GM12878 (cell line): ENCODE measurements at regions of chr9 and their contacts with region 1.

Region 1: DNA sequence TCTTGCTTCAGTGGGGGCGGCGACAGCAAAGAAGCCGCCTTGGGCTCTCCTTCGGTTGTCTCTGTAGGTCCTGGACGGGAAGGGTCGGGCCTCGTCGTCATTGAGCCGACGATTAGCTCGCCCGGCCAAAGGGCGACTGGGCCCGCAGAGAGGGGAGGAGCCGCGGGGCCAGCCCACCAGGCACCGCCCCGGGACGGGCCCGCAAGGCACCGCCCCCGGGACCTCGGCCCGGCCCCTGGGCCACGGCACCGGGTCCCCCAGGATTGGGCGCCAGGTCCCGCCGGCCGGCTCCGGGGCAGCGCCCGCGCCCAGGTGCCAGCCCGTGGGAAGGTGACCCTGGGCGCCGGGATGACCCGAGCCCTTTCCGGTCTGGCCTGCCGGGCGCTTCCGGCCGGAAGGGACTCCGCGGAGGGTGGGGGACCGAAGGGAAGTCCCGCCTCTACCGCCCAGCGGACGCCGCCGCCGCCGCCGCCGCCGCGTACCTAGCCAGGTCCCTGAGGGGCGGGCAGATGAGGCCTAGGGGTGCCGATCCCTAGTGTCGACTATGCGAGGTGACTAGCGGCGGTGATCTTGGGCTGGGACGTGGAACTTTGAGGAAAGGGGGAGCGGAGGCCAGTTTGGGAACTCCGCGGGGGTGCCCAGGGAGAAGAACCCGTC is at the starts of genes GBA2 and RGP1:
- DNase-seq: no peak
- ATAC-seq: peak; percentile 93
- H3K4me3 ChIP-seq: peak within 1 kb of the TSS; percentile 99
- H3K27ac ChIP-seq: peak within 1 kb of the TSS; percentile 75
- H3K4me1 ChIP-seq: peaks cover 4% of the 10 kb centered on the region
- H3K27me3 ChIP-seq: no peaks in the 10 kb centered on the region
- CTCF ChIP-seq: no peak
- EP300 ChIP-seq: no peak
- POLR2A ChIP-seq: peak; percentile 76
- RAD21 ChIP-seq: no peak
- polyA plus RNA-seq, gene GBA2: 15.3 TPM
- polyA plus RNA-seq, gene RGP1: 0.44 to 0.89 TPM

Region 2: DNA sequence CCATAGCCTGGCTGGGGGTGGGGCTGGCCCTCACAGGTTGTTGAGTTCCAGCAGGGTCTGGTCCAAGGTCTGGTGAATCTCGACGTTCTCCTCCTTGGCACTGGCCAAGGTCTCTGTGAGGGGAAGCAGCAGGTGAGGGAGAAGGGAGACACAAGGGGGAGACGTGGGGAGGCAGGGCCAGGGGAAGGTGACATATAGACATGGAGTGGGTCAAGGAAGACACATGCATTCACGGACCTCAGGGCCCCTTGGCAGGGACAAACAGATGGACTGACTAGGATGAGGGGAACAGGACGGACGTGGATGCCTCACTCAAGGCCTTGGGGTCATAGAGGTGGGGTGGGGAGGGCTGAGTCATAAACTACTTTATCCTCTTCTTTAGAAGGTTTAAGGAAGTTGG is 66.9 kb before region 1 on chr9:
- CTCF ChIA-PET with region 1: no interaction called
- POLR2A ChIA-PET with region 1: no interaction called
- RAD21 ChIA-PET with region 1: no interaction called
- SMC1A ChIA-PET with region 1: no interaction called
- in situ Hi-C with region 1: no loop called
- intact Hi-C with region 1: no loop called
- DNase-seq: no peak
- ATAC-seq: no peak
- H3K4me3 ChIP-seq: no peak overlapping the region
- H3K27ac ChIP-seq: no peak overlapping the region
- H3K4me1 ChIP-seq: peaks cover 8% of the 10 kb centered on the region
- H3K27me3 ChIP-seq: no peaks in the 10 kb centered on the region; a peak in 2 of 4 replicates
- CTCF ChIP-seq: no peak
- EP300 ChIP-seq: no peak
- POLR2A ChIP-seq: no peak
- RAD21 ChIP-seq: no peak

Region 3: DNA sequence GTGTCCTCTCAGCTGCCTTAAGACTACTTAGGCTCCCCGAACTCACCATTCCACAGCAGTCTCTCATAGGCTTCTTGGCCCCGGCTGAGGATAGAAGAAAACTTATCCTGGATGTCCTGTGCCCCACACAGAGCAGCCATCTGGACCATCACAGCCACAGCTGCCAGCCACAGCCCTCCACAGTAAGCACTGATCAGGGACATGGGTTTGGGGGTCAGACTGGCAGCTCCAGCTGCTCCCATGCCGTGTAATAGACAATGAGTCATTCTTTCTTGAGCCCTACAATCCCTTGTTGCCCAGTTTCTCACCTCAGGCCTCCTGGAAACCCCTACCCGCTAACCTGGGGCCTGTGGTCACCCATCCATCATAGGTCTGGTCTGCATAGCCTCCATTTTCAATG is 10.8 kb before region 1 on chr9:
- CTCF ChIA-PET with region 1: interaction called, 147 read pairs
- POLR2A ChIA-PET with region 1: interaction called, 70 read pairs
- RAD21 ChIA-PET with region 1: interaction called, 74 read pairs
- SMC1A ChIA-PET with region 1: interaction called, 39 read pairs
- in situ Hi-C with region 1: no loop called
- intact Hi-C with region 1: loop called (anchors 1 kb)
- DNase-seq: no peak
- ATAC-seq: no peak
- H3K4me3 ChIP-seq: no peak overlapping the region
- H3K27ac ChIP-seq: no peak overlapping the region
- H3K4me1 ChIP-seq: no peaks in the 10 kb centered on the region; the same call in 1 of the 2 replicates
- H3K27me3 ChIP-seq: no peaks in the 10 kb centered on the region
- CTCF ChIP-seq: no peak
- EP300 ChIP-seq: no peak
- POLR2A ChIP-seq: no peak; the same call in 1 of the 2 replicates
- RAD21 ChIP-seq: no peak